K562 (cell line): ENCODE measurements at regions of chr10 and their contacts with region 1.

Region 1: DNA sequence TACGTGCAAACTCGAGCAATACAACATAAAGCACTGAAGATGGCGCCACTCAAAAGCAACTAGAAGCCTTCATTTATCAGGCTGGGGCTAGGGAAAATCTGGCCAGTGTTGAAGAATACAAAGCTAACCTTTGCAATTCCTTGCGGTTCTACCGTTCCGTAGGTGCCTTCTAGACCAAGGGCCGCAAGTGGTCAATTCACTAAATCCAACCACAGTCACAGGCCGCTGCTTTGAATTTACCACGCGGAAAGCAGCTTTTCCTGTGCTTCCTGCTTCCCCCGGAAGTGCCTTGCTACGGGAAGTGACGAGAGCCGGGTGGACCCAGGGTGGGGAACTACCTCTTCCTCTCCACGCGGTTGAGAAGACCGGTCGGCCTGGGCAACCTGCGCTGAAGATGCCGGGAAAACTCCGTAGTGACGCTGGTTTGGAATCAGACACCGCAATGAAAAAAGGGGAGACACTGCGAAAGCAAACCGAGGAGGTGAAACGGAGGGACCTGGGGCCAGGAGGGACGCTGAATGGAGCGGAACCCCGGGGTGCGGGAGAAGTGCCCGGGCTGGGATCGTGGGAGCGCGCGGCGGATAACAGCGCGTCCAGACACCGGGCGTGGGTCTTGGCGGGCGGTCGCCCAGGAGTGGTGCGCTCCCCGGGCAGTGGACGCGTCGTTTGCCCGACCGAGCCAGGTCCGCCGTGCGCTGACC is at the start of gene DDX21:
- DNase-seq: peak; percentile 93 to 97 (median 96)
- ATAC-seq: peak; percentile 90
- H3K4me3 ChIP-seq: peak within 1 kb of the TSS; percentile 93
- H3K27ac ChIP-seq: peak within 1 kb of the TSS; percentile 95
- H3K4me1 ChIP-seq: peaks cover 22% of the 10 kb centered on the region in 2 experiments; a peak in 4 of 5 replicates
- H3K27me3 ChIP-seq: no peaks in the 10 kb centered on the region
- CTCF ChIP-seq: peak; percentile 63 to 86 (median 76)
- EP300 ChIP-seq: no peak
- POLR2A ChIP-seq: peak; percentile 99
- RAD21 ChIP-seq: peak; percentile 49 to 55
- polyA plus RNA-seq, gene DDX21: 143 to 156 TPM

Region 2: DNA sequence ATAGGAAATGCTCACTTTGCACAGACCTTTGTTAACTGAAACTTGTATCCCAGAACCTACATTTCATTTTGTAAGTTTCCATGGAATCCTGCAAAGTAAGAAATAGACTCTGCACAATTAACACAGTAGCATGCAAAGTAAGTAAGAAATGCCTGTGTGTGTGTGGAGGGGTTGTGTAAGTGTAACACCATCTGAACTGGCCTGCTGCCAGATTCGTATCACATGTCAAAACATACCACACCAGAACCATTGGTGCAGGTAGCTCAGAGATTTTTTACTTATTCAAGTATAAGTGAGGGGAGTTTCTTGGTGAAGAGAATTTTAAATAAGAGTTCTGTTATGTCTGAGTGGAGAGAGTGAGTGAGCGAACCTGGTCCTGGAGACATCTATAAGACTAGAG is 17.9 kb before region 1 on chr10:
- CTCF ChIA-PET with region 1: no interaction called
- POLR2A ChIA-PET with region 1: interaction called, 47 read pairs
- in situ Hi-C with region 1: no loop called
- intact Hi-C with region 1: no loop called
- DNase-seq: peak in 2 of 4 experiments; percentile 23 to 28
- ATAC-seq: peak; percentile 66
- H3K4me3 ChIP-seq: no peak overlapping the region
- H3K27ac ChIP-seq: no peak overlapping the region
- H3K4me1 ChIP-seq: no peaks in the 10 kb centered on the region
- H3K27me3 ChIP-seq: no peaks in the 10 kb centered on the region
- CTCF ChIP-seq: no peak
- EP300 ChIP-seq: no peak
- POLR2A ChIP-seq: no peak
- RAD21 ChIP-seq: no peak

Region 3: DNA sequence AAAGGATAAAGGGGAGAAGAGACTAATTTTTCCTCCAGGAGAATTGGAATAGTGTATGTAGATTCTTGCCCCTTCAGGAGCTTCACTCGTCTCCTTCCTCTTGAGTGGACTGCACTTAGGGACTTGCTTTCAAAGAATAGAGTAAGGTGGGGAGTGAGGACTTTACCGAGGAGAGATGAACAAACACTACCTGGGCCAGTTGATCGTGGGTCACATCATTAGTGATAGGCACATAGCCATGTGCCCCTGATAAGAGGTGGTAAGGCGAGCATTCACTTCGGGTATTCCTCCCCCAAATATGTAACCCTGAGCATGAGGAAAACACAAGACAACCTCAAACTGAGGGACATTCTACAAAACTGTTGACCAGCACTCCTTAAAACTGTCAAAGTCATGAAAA is 18.0 kb after region 1 on chr10:
- CTCF ChIA-PET with region 1: no interaction called
- POLR2A ChIA-PET with region 1: interaction called, 99 read pairs
- in situ Hi-C with region 1: no loop called
- intact Hi-C with region 1: no loop called
- DNase-seq: no peak
- ATAC-seq: no peak
- H3K4me3 ChIP-seq: no peak overlapping the region
- H3K27ac ChIP-seq: no peak overlapping the region
- H3K4me1 ChIP-seq: no peaks in the 10 kb centered on the region
- H3K27me3 ChIP-seq: no peaks in the 10 kb centered on the region
- CTCF ChIP-seq: no peak
- EP300 ChIP-seq: no peak
- POLR2A ChIP-seq: 0 out of 2 replicates have a peak, but pooled peaks have one; percentile 39
- RAD21 ChIP-seq: no peak

Region 4: DNA sequence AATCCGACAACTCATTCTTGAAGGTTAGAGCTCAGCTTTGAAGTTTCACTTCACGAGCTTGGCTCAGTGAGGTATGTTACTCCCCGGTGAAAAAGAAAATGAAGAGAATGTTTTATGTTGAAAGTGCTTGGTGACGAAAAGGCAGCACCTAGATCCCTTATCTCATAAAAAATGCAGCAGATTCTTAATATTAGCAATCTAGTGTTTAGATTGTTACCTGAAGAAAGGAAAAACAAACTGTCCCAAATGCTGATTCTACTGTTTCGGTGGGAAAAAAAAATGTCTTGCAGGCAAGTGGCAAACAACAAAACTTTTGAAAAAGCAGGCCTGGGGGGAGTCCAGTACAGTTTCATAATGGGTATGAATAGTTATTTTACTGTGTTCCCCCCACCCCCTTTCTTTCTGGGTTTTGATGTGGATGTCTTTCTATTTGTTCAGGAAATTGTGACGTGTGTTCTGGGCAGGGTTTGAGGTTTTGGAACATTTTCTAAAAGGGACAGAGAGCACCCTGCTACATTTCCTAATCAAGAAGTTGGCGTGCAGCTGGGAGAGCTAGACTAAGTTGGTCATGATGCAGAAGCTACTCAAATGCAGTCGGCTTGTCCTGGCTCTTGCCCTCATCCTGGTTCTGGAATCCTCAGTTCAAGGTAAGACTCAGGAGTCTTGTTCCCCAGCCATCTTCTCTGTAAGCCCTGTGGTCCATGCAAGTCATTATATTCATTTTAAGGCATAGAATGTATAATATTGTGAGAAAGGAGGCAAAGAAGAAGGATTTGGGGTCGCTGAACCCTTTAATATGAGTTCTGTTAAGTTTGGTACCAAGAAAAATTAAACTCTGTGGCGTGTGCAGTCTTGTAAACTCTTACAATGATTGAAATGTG is 131.8 kb after region 1 on chr10 and contains the start of gene SRGN:
- CTCF ChIA-PET with region 1: interaction called, 4 read pairs
- POLR2A ChIA-PET with region 1: interaction called, 5 read pairs
- in situ Hi-C with region 1: no loop called
- intact Hi-C with region 1: loop called (anchors 2 kb)
- DNase-seq: peak in 3 of 4 experiments; percentile 27 to 90 (median 79)
- ATAC-seq: peak; percentile 70
- H3K4me3 ChIP-seq: peak within 1 kb of the TSS; percentile 51
- H3K27ac ChIP-seq: peak within 1 kb of the TSS; percentile 89
- H3K4me1 ChIP-seq: peaks cover 3 to 28% of the 10 kb centered on the region in 2 experiments; a peak in 4 of 5 replicates
- H3K27me3 ChIP-seq: no peaks in the 10 kb centered on the region
- CTCF ChIP-seq: no peak
- EP300 ChIP-seq: no peak
- POLR2A ChIP-seq: peak; percentile 96
- RAD21 ChIP-seq: no peak
- polyA plus RNA-seq, gene SRGN: 275 to 304 TPM